ENCODE measurements at regions of chr3 and their contacts with region 1.

Region 1: DNA sequence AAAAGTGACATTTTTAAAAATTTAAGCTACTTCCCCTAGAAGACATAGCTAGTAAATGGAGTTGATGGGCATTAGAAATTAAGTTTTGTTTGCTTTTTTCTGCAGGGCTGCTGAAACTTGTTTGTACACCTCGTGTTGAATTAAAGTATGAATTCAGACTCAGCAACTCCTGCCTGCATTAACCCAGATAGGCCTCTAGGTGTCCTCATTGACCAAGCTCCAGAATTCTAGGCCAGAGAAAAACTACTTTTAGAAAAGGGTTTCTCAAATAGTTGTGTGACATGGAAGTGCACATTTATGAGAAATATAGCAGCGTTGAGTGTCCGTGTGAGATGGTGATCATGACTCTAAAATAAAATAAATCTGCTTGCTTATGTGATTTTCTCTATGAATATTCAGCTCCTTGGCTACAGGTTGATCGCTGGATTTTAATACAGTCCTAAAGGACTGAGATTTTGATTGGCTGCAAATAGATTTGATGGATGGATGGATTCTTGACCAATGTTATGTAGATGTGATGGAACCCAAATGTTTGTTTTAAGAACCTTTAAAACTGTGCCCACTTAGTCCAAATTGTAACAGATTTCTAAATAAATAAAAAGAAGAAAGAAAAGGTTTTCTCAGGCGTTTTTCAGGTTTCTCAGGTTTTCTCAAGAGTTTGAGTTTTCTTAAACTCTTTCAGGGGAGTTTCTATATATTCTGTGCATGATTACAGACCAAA is 39.4 kb upstream of the LMOD3 start:
- DNase-seq: peak; percentile 62
- ATAC-seq: peak; percentile 60
- H3K4me3 Mint-ChIP-seq: no peak overlapping the region
- H3K27ac Mint-ChIP-seq: no peak overlapping the region
- H3K4me1 Mint-ChIP-seq: peaks cover 11% of the 10 kb centered on the region
- H3K27me3 Mint-ChIP-seq: peaks cover 7% of the 10 kb centered on the region

Region 2: GRCh38 chr3:68963891-68964290 is 197.9 kb before region 1 on chr3:
- CTCF ChIA-PET with region 1: no interaction called
- POLR2A ChIA-PET with region 1: no interaction called
- DNase-seq: no peak
- ATAC-seq: no peak
- H3K4me3 Mint-ChIP-seq: no peak overlapping the region
- H3K27ac Mint-ChIP-seq: no peak overlapping the region
- H3K4me1 Mint-ChIP-seq: no peaks in the 10 kb centered on the region
- H3K27me3 Mint-ChIP-seq: peaks cover 25% of the 10 kb centered on the region

Region 3: GRCh38 chr3:69174871-69175737 is 13.4 kb after region 1 on chr3:
- CTCF ChIA-PET with region 1: interaction called, 19 read pairs
- POLR2A ChIA-PET with region 1: no interaction called
- DNase-seq: no peak
- ATAC-seq: no peak
- H3K4me3 Mint-ChIP-seq: no peak overlapping the region
- H3K27ac Mint-ChIP-seq: no peak overlapping the region
- H3K4me1 Mint-ChIP-seq: peaks cover 13% of the 10 kb centered on the region
- H3K27me3 Mint-ChIP-seq: no peaks in the 10 kb centered on the region

Region 4: GRCh38 chr3:69191516-69191915 is 29.8 kb after region 1 on chr3:
- CTCF ChIA-PET with region 1: interaction called, 11 read pairs
- POLR2A ChIA-PET with region 1: no interaction called
- DNase-seq: no peak
- ATAC-seq: no peak
- H3K4me3 Mint-ChIP-seq: no peak overlapping the region
- H3K27ac Mint-ChIP-seq: no peak overlapping the region
- H3K4me1 Mint-ChIP-seq: peaks cover 13% of the 10 kb centered on the region
- H3K27me3 Mint-ChIP-seq: no peaks in the 10 kb centered on the region

Region 5: GRCh38 chr3:69231929-69232440 is 70.2 kb after region 1 on chr3:
- CTCF ChIA-PET with region 1: interaction called, 29 read pairs
- POLR2A ChIA-PET with region 1: no interaction called
- DNase-seq: no peak
- ATAC-seq: no peak
- H3K4me3 Mint-ChIP-seq: no peak overlapping the region
- H3K27ac Mint-ChIP-seq: no peak overlapping the region
- H3K4me1 Mint-ChIP-seq: peaks cover 17% of the 10 kb centered on the region
- H3K27me3 Mint-ChIP-seq: peaks cover 6% of the 10 kb centered on the region

Region 6: DNA sequence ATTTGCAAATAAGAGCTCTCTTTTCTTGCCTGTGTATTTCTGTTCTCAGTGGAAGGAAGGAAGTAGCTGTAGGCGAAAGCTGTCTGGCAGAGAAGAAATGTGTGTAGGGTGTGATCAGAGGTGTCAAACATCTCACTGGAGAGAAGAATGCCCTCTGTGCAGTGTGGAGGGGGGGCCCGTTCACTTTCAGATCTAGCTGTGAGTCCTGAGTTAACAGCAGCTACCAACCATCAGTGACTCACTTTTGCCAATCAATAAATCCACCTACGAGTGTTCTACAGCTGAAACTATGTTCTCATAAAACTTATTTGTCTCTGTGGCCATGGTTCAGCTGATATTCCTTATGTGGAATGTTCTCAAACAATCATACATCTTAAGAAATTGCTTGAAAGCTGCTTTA is 120.4 kb after region 1 on chr3:
- CTCF ChIA-PET with region 1: interaction called, 17 read pairs
- POLR2A ChIA-PET with region 1: no interaction called
- DNase-seq: peak; percentile 45
- ATAC-seq: peak; percentile 85
- H3K4me3 Mint-ChIP-seq: no peak overlapping the region
- H3K27ac Mint-ChIP-seq: no peak overlapping the region
- H3K4me1 Mint-ChIP-seq: peaks cover 12% of the 10 kb centered on the region
- H3K27me3 Mint-ChIP-seq: no peaks in the 10 kb centered on the region

Region 7: DNA sequence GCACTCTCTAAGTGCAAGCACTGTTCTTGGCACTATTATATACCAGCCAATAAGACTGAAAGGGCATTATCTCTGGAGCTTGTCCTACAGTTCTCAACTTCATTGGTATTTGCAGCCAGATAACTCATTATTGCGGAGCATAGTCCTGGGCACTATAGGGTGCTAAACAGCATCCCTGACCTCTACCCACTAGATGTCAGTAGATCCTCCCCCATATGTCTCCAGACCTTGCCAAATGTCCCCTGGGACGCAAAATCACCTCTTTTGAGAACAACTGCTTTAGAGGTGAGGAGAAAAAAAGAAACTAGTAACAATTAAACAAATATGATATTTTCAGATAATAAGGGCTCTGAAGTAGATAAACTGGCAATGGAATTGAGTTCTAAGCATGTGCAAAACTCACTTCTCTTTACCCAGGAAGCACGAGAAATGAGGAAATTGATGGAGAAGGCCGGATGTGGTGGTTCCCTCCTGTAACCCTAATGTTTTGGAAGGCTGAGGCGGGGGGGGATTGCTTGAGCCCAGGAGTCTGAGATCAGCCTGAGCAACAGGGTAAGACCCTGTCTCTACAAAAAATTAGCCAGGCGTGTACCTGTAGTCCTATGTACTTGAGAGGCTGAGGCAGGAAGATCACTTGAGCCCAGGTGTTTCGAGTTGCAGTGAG is 162.7 kb after region 1 on chr3:
- CTCF ChIA-PET with region 1: interaction called, 28 read pairs
- POLR2A ChIA-PET with region 1: no interaction called
- DNase-seq: peak; percentile 33
- ATAC-seq: peak; percentile 24
- H3K4me3 Mint-ChIP-seq: no peak overlapping the region
- H3K27ac Mint-ChIP-seq: no peak overlapping the region
- H3K4me1 Mint-ChIP-seq: peaks cover 36% of the 10 kb centered on the region
- H3K27me3 Mint-ChIP-seq: no peaks in the 10 kb centered on the region

Region 8: DNA sequence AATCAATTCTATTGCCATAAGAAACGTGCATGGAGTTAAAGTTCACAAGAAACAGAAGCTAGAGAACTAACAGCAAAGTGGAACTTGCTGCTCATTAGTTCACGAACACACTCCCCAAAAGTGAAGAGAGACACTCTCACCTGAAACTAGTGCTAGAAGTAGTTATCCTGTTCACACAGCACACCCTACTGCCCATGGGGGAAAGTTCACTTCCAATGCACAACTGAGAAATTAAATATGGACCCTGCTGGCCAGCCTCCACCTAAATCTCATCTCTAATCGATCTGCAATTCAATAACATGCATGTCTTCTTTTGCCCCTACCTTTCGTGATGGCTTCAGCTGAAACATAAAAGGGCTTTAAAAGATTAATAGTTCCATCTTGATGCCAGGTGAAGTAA is 263.5 kb after region 1 on chr3:
- CTCF ChIA-PET with region 1: interaction called, 33 read pairs
- POLR2A ChIA-PET with region 1: no interaction called
- DNase-seq: peak; percentile 53
- ATAC-seq: peak; percentile 64
- H3K4me3 Mint-ChIP-seq: no peak overlapping the region
- H3K27ac Mint-ChIP-seq: no peak overlapping the region
- H3K4me1 Mint-ChIP-seq: no peaks in the 10 kb centered on the region
- H3K27me3 Mint-ChIP-seq: peaks cover 10% of the 10 kb centered on the region

Measured in activated CD8-positive, alpha-beta T cell treated with anti-CD3 and anti-CD28 coated beads, Interleukin-2, amount 10 ng/mL, durations not matched to agents 7 days and 5 days (primary cell).